ENCODE measurements at regions of chr1 and their contacts with region 1.

Region 1: GRCh38 chr1:205325334-205325884 is 3.9 kb upstream of the NUAK2 start:
- DNase-seq: peak; percentile 73 to 83 (median 80)
- ATAC-seq: peak; percentile 54
- H3K4me3 ChIP-seq: no peak overlapping the region
- H3K27ac ChIP-seq: peak overlapping the region; percentile 17 to 76 (median 68)
- H3K4me1 ChIP-seq: peaks cover 47% of the 10 kb centered on the region
- H3K27me3 ChIP-seq: no peaks in the 10 kb centered on the region
- CTCF ChIP-seq: peak; percentile 60 to 92 (median 84)
- POLR2A ChIP-seq: no peak

Region 2: GRCh38 chr1:205098242-205098641 is 227.2 kb before region 1 on chr1:
- intact Hi-C with region 1: no loop called
- DNase-seq: no peak
- ATAC-seq: no peak
- H3K4me3 ChIP-seq: no peak overlapping the region
- H3K27ac ChIP-seq: no peak overlapping the region
- H3K4me1 ChIP-seq: no peaks in the 10 kb centered on the region
- H3K27me3 ChIP-seq: no peaks in the 10 kb centered on the region
- CTCF ChIP-seq: no peak
- POLR2A ChIP-seq: no peak

Region 3: GRCh38 chr1:205273551-205273982 is 51.8 kb before region 1 on chr1:
- intact Hi-C with region 1: loop called (anchors 5 kb)
- DNase-seq: peak; percentile 94 to 96 (median 95)
- ATAC-seq: peak; percentile 79
- H3K4me3 ChIP-seq: no peak overlapping the region
- H3K27ac ChIP-seq: peak overlapping the region; percentile 64 to 83 (median 78)
- H3K4me1 ChIP-seq: peaks cover 33% of the 10 kb centered on the region
- H3K27me3 ChIP-seq: no peaks in the 10 kb centered on the region
- CTCF ChIP-seq: peak; percentile 96 to 99 (median 99)
- POLR2A ChIP-seq: no peak

Region 4: GRCh38 chr1:205430696-205431305 is 105.4 kb after region 1 on chr1:
- intact Hi-C with region 1: no loop called
- DNase-seq: peak; percentile 61 to 79 (median 71)
- ATAC-seq: peak; percentile 77
- H3K4me3 ChIP-seq: peak overlapping the region; percentile 9 to 29
- H3K27ac ChIP-seq: no peak overlapping the region
- H3K4me1 ChIP-seq: peaks cover 9% of the 10 kb centered on the region
- H3K27me3 ChIP-seq: no peaks in the 10 kb centered on the region
- CTCF ChIP-seq: peak; percentile 69 to 96 (median 84)
- POLR2A ChIP-seq: no peak

Region 5: GRCh38 chr1:205504311-205504984 is 179.0 kb after region 1 on chr1 and contains the start of gene CDK18:
- intact Hi-C with region 1: no loop called
- DNase-seq: peak; percentile 89 to 95 (median 92)
- ATAC-seq: peak; percentile 88
- H3K4me3 ChIP-seq: peak within 1 kb of the TSS; percentile 33 to 52
- H3K27ac ChIP-seq: peak within 1 kb of the TSS; percentile 54 to 77 (median 69)
- H3K4me1 ChIP-seq: peaks cover 25% of the 10 kb centered on the region
- H3K27me3 ChIP-seq: no peaks in the 10 kb centered on the region
- CTCF ChIP-seq: no peak
- POLR2A ChIP-seq: peak; percentile 22 to 68 (median 64)
- total RNA-seq, gene CDK18: 28.0 to 28.7 TPM

Region 6: DNA sequence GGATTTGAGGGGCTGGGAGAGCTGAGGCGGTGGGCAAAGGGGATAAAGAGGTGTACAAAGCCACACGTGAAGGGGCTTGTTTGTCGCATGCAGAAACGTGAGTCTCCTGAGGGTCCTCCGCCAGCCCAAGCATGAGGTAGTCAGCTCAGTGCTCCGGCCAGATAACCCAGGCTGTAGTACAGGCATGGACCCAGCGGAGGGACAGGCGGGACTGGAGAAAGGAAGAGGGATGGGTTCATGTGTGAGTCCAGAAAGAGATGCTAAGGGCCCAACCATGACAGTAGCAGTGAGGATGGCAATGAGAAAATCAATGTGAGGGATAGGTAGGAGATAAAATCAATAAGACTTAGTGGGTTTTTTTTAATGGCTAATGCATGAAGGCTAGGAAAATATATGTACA is 320.1 kb after region 1 on chr1:
- intact Hi-C with region 1: no loop called
- DNase-seq: no peak
- ATAC-seq: no peak
- H3K4me3 ChIP-seq: no peak overlapping the region
- H3K27ac ChIP-seq: no peak overlapping the region
- H3K4me1 ChIP-seq: no peaks in the 10 kb centered on the region
- H3K27me3 ChIP-seq: no peaks in the 10 kb centered on the region
- CTCF ChIP-seq: no peak
- POLR2A ChIP-seq: no peak

Measured in body of pancreas (tissue), 4 donors.